Activated CD4-positive, alpha-beta T cell treated with anti-CD3 and anti-CD28 coated beads for 36 hours (primary cell): ENCODE measurements at regions of chr10 and their contacts with region 1.

Region 1: DNA sequence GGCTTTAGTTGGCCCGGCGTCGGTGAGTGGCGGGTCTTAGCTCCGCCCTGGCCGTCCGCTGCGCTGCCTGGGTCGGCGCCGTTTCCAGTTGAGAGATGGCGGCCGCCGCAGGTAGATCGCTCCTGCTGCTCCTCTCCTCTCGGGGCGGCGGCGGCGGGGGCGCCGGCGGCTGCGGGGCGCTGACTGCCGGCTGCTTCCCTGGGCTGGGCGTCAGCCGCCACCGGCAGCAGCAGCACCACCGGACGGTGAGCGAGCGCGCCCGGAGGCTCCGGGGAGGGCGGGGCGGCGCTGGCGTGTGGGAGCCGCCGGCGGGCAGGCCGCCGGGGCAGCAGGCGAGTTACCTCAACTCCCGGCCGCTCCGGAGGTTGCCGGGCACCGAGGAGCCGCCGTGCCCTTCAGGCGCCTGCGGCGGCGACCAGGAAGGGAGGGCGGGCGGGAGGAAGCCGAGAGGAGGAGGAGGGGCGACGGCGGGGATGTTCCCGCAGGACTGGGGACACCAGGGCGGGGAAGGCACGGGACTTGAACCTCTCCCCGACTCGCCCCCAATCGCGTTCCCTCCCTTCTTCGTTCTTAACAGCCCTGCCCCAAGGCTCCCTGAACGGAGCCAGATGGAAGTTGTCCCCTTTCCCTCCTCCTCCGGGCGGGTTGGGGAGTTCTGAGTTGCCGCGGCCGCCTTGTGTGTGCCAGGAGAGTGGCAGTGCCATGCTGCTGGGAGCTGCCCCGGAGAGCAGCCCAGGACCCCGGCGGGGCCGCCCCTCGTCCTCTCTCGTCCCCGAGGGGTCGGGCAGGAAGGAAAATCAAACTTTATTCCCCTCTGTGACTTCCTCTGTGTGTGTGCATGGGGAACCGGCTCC is at the start of gene MCU:
- DNase-seq: peak; percentile 96
- ATAC-seq: peak; percentile 98
- H3K4me3 Mint-ChIP-seq: peak within 1 kb of the TSS; percentile 77
- H3K27ac Mint-ChIP-seq: peak within 1 kb of the TSS; percentile 75
- H3K4me1 Mint-ChIP-seq: peaks cover 40% of the 10 kb centered on the region
- H3K27me3 Mint-ChIP-seq: no peaks in the 10 kb centered on the region
- total RNA-seq, gene MCU: 15.1 to 16.0 TPM

Region 2: GRCh38 chr10:72354478-72355213 is 337.6 kb before region 1 on chr10 and contains the start of gene DNAJB12:
- CTCF ChIA-PET with region 1: no interaction called
- POLR2A ChIA-PET with region 1: interaction called, 5 read pairs
- intact Hi-C with region 1: loop called in 1 of 2 experiments (anchors 2 kb)
- DNase-seq: peak; percentile 93
- ATAC-seq: peak; percentile 83
- H3K4me3 Mint-ChIP-seq: peak within 1 kb of the TSS; percentile 82
- H3K27ac Mint-ChIP-seq: peak within 1 kb of the TSS; percentile 98
- H3K4me1 Mint-ChIP-seq: peaks cover 35% of the 10 kb centered on the region
- H3K27me3 Mint-ChIP-seq: no peaks in the 10 kb centered on the region
- total RNA-seq, gene DNAJB12: 19.7 to 21.9 TPM

Region 3: DNA sequence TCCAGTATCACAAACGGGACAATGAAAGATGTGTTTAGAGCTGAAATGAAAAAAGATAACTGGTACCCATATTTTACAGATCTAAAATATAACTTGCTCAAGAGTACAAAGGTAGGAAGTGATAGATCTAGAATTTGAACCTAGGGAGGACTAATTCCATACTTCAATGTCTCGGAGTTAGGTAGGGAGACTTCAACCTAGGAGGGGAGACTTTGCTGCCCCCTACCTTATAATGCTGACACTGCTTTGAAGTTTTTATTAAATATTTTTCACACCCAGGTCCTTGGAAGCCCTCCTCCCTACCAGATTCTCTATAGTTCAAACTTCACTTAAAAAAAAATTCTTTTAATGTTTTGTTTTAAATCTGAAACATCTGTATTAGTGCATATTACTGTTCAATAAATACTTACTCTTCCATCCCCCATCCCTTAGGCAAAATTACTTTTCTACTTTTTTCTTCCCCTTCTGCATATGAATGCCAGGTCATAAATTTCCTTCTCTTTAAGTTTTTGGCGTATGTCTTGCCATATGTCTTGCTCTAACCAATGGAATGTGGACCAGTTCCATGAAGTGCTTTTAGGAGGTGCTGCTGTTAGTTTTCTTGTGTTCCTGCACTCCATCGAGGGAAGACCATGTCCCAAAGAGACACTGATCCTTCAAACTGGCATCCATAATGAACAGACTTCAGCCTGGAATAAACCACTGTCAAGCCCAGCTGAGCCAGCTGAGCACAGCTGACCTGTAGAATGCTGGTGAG is 124.2 kb before region 1 on chr10:
- CTCF ChIA-PET with region 1: no interaction called
- POLR2A ChIA-PET with region 1: no interaction called
- intact Hi-C with region 1: loop called (anchors 2 to 5 kb)
- DNase-seq: no peak
- ATAC-seq: no peak
- H3K4me3 Mint-ChIP-seq: no peak overlapping the region
- H3K27ac Mint-ChIP-seq: no peak overlapping the region
- H3K4me1 Mint-ChIP-seq: peaks cover 17% of the 10 kb centered on the region
- H3K27me3 Mint-ChIP-seq: no peaks in the 10 kb centered on the region

Region 4: DNA sequence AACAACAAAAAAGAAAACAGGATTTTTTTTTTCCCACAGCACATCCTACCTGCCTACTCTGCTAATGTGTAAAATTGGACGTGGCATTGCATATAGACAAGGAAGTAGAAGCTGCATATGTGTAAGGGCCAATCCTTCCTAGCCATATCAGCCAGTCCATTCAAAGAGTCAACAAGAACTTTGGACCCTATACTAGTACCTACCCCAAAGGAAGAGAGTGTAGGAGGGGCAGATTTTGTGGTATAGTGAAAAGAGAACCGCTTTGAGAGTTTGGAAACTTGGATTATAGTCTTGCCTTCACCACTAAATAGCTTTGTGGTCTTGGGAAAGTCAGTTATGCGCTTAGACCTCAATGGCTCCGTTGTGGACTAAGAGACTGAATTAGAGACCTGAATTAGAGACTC is 12.4 kb before region 1 on chr10:
- CTCF ChIA-PET with region 1: interaction called, 4 read pairs
- POLR2A ChIA-PET with region 1: interaction called, 11 read pairs
- intact Hi-C with region 1: no loop called
- DNase-seq: no peak
- ATAC-seq: no peak
- H3K4me3 Mint-ChIP-seq: no peak overlapping the region
- H3K27ac Mint-ChIP-seq: no peak overlapping the region
- H3K4me1 Mint-ChIP-seq: peaks cover 12% of the 10 kb centered on the region
- H3K27me3 Mint-ChIP-seq: peaks cover 3% of the 10 kb centered on the region

Region 5: GRCh38 chr10:72875250-72876055 is 183.2 kb after region 1 on chr10:
- CTCF ChIA-PET with region 1: no interaction called
- POLR2A ChIA-PET with region 1: no interaction called
- intact Hi-C with region 1: loop called in 1 of 2 experiments (anchors 2 kb)
- DNase-seq: no peak
- ATAC-seq: peak; percentile 39
- H3K4me3 Mint-ChIP-seq: no peak overlapping the region
- H3K27ac Mint-ChIP-seq: no peak overlapping the region
- H3K4me1 Mint-ChIP-seq: no peaks in the 10 kb centered on the region
- H3K27me3 Mint-ChIP-seq: no peaks in the 10 kb centered on the region

Region 6: DNA sequence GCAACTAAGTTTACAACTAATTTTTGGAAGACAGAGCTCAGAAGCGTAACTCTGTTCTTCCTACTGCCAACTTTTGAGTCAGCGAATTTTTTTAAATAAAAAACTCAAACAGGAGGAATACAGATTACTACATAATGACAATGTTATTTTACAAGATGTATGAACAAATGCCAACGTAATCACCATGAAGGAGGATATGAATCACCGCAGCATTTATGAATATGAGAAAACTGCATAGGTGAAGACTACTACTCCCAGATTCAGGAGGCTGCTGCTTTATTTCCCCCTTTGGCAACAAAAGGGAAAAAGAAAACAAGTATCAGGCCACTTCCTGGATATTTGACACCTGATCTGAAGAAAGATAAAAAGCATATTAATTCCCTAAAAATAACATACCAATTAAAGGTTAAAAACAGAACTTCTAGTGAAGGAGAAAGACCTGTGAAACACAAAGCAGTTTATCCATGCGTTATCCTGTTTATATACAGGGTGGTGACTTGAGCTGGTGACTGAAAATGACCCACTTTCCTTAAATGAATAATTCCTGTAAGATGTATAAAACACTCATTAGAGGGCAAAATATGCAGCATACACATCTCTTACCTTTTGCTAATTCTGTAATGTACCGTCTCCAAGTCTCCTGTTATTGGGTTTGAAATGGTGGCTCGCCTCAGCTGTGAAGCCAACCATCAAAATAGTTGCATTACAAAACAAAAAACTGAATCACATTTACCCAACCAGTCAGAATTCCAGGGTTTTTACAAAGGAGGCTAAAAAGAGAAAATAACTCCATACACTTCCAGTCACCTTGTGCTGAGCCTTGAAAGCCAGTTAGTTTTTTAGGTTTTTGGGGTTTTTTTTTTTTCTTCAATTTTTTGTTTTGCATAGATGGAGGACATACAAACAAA is 352.3 kb after region 1 on chr10:
- CTCF ChIA-PET with region 1: no interaction called
- POLR2A ChIA-PET with region 1: no interaction called
- intact Hi-C with region 1: no loop called
- DNase-seq: no peak
- ATAC-seq: peak; percentile 36
- H3K4me3 Mint-ChIP-seq: no peak overlapping the region
- H3K27ac Mint-ChIP-seq: no peak overlapping the region
- H3K4me1 Mint-ChIP-seq: peaks cover 6% of the 10 kb centered on the region
- H3K27me3 Mint-ChIP-seq: no peaks in the 10 kb centered on the region